CD4-positive, alpha-beta memory T cell (primary cell): ENCODE measurements at regions of chr10 and their contacts with region 1.

Region 1: GRCh38 chr10:89837150-89837888 is 135.9 kb downstream of the KIF20B start:
- DNase-seq: peak; percentile 28 to 50 (median 36)
- H3K4me3 ChIP-seq: peak overlapping the region; percentile 26 to 63
- H3K4me3 Mint-ChIP-seq: peak overlapping the region; percentile 87 to 94 (median 90)
- H3K27ac ChIP-seq: peak overlapping the region; percentile 30
- H3K27ac Mint-ChIP-seq: peak overlapping the region in 6 of 7 donors; percentile 28 to 96 (median 90)
- H3K4me1 ChIP-seq: peaks cover 7% of the 10 kb centered on the region
- H3K4me1 Mint-ChIP-seq: peaks cover 5 to 25% (median 13%) of the 10 kb centered on the region in 4 donors
- H3K27me3 ChIP-seq: no peaks in the 10 kb centered on the region
- H3K27me3 Mint-ChIP-seq: peaks cover 0 to 3% of the 10 kb centered on the region in 2 donors

Region 2: DNA sequence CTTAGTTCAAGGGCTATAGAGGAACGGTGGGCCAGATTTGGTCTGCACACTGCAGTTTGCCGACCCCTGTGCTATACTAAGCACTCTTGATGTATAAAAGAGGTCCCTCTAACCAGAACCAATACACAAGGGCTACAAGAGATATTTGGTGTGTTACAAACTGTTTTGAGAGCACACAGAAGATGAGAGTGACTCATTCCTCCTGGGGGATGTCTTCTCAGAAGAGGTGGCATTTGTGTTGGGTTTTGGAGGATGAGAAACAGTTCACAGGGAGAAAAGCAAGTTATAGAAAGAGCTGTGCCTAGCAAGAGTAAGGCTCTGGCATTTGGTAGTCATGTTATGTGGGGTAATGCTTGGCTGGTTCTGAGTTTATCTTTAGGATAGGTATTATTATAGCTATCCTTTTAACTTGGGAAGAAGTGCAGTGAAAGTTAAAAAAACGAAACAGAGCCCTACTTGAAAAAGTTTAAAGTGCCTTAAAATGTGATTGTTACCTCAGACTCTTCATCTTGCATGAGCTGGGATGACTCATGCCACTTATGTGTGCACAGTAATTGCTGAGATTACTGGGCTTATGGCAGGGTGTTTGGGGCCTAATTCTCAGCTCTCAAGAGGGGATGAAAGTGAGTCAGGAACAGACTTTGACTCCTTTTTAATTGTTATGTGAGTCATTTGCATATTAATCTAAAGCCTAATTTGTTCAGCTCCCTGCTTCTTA is 24.4 kb after region 1 on chr10:
- CTCF ChIA-PET with region 1: no interaction called
- POLR2A ChIA-PET with region 1: no interaction called
- intact Hi-C with region 1: loop called (anchors 1 kb)
- DNase-seq: peak in 1 of 5 donors; percentile 37
- H3K4me3 ChIP-seq: no peak overlapping the region
- H3K4me3 Mint-ChIP-seq: peak overlapping the region in 5 of 8 donors; percentile 5 to 71 (median 18)
- H3K27ac ChIP-seq: no peak overlapping the region
- H3K27ac Mint-ChIP-seq: peak overlapping the region; percentile 24 to 93 (median 77)
- H3K4me1 ChIP-seq: peaks cover 20% of the 10 kb centered on the region
- H3K4me1 Mint-ChIP-seq: peaks cover 14 to 22% (median 18%) of the 10 kb centered on the region in 4 donors
- H3K27me3 ChIP-seq: no peaks in the 10 kb centered on the region
- H3K27me3 Mint-ChIP-seq: peaks cover 0 to 3% of the 10 kb centered on the region in 2 donors